Activated CD4-positive, alpha-beta memory T cell treated with anti-CD3 and anti-CD28 coated beads for 36 hours (primary cell): ENCODE measurements at regions of chr4 and their contacts with region 1.

Region 1: DNA sequence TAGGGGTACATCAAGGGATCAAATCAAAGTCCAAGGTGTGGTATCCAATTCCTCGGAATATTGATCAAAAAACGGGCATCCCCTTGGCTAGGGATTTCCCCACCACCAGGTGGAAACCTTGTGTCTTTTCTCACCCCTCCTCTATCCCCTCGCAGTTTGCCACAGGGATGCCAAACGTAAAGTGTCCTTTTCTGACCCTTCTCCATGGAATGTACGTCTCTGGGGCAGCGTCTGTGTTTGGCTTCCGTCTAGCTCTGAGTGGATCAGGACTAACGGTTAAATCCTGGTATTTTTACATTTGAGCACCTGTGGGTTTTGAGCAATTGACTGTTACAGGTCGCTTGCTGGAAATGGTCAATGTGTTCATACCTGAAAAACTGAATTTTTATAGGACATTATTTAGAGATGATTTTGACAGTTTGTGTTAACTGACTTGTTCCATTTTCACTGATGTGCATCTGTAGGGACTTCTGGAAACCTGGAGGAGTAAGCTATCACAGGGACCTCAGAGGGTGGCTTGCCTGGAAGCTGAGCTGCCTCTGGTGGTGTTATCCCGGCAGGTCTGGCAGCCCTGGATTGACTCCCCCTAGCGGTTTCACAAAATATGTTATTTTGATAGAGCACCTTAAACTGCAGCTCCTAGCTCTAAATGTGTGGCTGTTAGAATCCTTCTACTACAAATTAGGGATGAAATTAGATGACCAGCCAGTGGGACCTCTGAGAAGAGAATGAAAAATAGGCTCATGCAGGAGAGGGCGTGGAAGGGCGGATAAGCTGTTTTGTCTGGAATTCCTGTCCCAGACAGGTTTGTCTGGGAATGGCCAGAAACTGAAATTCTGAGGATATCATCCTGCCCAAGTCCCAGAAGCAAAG is 8.8 kb upstream of the MGST2 start:
- DNase-seq: peak; percentile 63
- H3K4me3 Mint-ChIP-seq: peak overlapping the region; percentile 61
- H3K27ac Mint-ChIP-seq: peak overlapping the region; percentile 93
- H3K4me1 Mint-ChIP-seq: peaks cover 28% of the 10 kb centered on the region
- H3K27me3 Mint-ChIP-seq: peaks cover 7% of the 10 kb centered on the region

Region 2: GRCh38 chr4:139015269-139015947 is 641.4 kb before region 1 on chr4 and contains the start of gene NOCT:
- CTCF ChIA-PET with region 1: interaction called, 6 read pairs
- POLR2A ChIA-PET with region 1: no interaction called
- intact Hi-C with region 1: loop called (anchors 5 kb)
- DNase-seq: peak; percentile 97
- H3K4me3 Mint-ChIP-seq: peak within 1 kb of the TSS; percentile 89
- H3K27ac Mint-ChIP-seq: peak within 1 kb of the TSS; percentile 94
- H3K4me1 Mint-ChIP-seq: peaks cover 45% of the 10 kb centered on the region
- H3K27me3 Mint-ChIP-seq: no peaks in the 10 kb centered on the region
- total RNA-seq, gene NOCT: 12.2 to 14.3 TPM

Region 3: GRCh38 chr4:139453371-139454110 is 203.3 kb before region 1 on chr4:
- CTCF ChIA-PET with region 1: no interaction called
- POLR2A ChIA-PET with region 1: no interaction called
- intact Hi-C with region 1: loop called (anchors 2 kb)
- DNase-seq: peak; percentile 98
- H3K4me3 Mint-ChIP-seq: peak overlapping the region; percentile 95
- H3K27ac Mint-ChIP-seq: peak overlapping the region; percentile 97
- H3K4me1 Mint-ChIP-seq: peaks cover 50% of the 10 kb centered on the region
- H3K27me3 Mint-ChIP-seq: no peaks in the 10 kb centered on the region

Region 4: GRCh38 chr4:139619644-139620043 is 37.2 kb before region 1 on chr4:
- CTCF ChIA-PET with region 1: interaction called, 10 read pairs
- POLR2A ChIA-PET with region 1: no interaction called
- intact Hi-C with region 1: no loop called
- DNase-seq: no peak
- H3K4me3 Mint-ChIP-seq: no peak overlapping the region
- H3K27ac Mint-ChIP-seq: no peak overlapping the region
- H3K4me1 Mint-ChIP-seq: no peaks in the 10 kb centered on the region
- H3K27me3 Mint-ChIP-seq: peaks cover 2% of the 10 kb centered on the region

Region 5: GRCh38 chr4:139704915-139705485 is 48.1 kb after region 1 on chr4:
- CTCF ChIA-PET with region 1: interaction called, 10 read pairs
- POLR2A ChIA-PET with region 1: no interaction called
- intact Hi-C with region 1: loop called (anchors 2 kb)
- DNase-seq: no peak
- H3K4me3 Mint-ChIP-seq: no peak overlapping the region
- H3K27ac Mint-ChIP-seq: no peak overlapping the region
- H3K4me1 Mint-ChIP-seq: no peaks in the 10 kb centered on the region
- H3K27me3 Mint-ChIP-seq: peaks cover 3% of the 10 kb centered on the region

Region 6: DNA sequence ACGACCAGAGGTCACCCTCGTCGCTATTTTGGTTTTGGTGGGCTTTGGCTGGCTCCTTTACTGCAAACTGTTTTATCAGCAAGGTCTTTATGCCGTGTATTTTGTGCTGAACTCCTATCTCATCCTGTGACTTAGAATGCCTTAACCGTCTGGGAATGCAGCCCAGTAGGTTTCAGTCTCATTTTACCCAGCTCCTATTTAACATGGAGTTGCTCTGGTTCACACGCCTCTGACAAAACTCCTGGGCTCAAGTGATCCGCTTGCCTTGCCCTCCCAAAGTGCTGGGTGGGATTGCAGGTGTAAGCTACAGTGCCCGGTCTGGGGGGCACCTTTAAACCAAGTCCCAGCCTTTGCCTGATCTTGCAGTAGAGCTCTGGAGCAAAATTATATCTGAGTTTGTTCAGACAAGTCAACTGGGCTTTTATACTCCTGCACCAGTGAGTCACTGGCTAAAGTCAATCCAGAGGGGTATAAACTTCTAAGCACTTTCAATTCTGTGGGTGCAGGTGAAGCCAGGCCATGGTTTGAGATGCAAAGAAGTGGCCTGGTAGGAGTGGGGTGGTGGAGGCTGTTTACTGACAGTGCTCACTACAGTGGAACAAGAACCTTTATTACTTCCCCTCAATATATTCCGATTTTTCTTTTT is 59.0 kb after region 1 on chr4:
- CTCF ChIA-PET with region 1: no interaction called
- POLR2A ChIA-PET with region 1: no interaction called
- intact Hi-C with region 1: no loop called
- DNase-seq: no peak
- H3K4me3 Mint-ChIP-seq: no peak overlapping the region
- H3K27ac Mint-ChIP-seq: no peak overlapping the region
- H3K4me1 Mint-ChIP-seq: no peaks in the 10 kb centered on the region
- H3K27me3 Mint-ChIP-seq: no peaks in the 10 kb centered on the region

Region 7: GRCh38 chr4:139950568-139950967 is 293.7 kb after region 1 on chr4:
- CTCF ChIA-PET with region 1: no interaction called
- POLR2A ChIA-PET with region 1: no interaction called
- intact Hi-C with region 1: loop called (anchors 2 kb)
- DNase-seq: peak; percentile 61
- H3K4me3 Mint-ChIP-seq: no peak overlapping the region
- H3K27ac Mint-ChIP-seq: peak overlapping the region; percentile 36
- H3K4me1 Mint-ChIP-seq: peaks cover 15% of the 10 kb centered on the region
- H3K27me3 Mint-ChIP-seq: peaks cover 2% of the 10 kb centered on the region

Region 8: GRCh38 chr4:140252742-140253555 is 596.1 kb after region 1 on chr4:
- CTCF ChIA-PET with region 1: interaction called, 4 read pairs
- POLR2A ChIA-PET with region 1: no interaction called
- intact Hi-C with region 1: loop called (anchors 2 kb)
- DNase-seq: peak; percentile 63
- H3K4me3 Mint-ChIP-seq: peak overlapping the region; percentile 55
- H3K27ac Mint-ChIP-seq: no peak overlapping the region
- H3K4me1 Mint-ChIP-seq: peaks cover 17% of the 10 kb centered on the region
- H3K27me3 Mint-ChIP-seq: peaks cover 20% of the 10 kb centered on the region